Activated T-helper 1 cell treated with anti-CD3 and anti-CD28 coated beads, Interleukin-12 subunit alpha, Interleukin-12 subunit beta, Interleukin-2, Interleukin-4 antibody, amounts not matched to agents 30 ng/mL and 10 ng/mL and 1 ng/mL, durations not matched to agents 14 hours and 24 hours and 36 hours (primary cell): ENCODE measurements at regions of chr3 and their contacts with region 1.

Region 1: GRCh38 chr3:119989981-119990655 is 104.1 kb downstream of the GSK3B start:
- DNase-seq: no peak
- H3K4me3 Mint-ChIP-seq: no peak overlapping the region
- H3K27ac Mint-ChIP-seq: no peak overlapping the region
- H3K4me1 Mint-ChIP-seq: peaks cover 4% of the 10 kb centered on the region
- H3K27me3 Mint-ChIP-seq: no peaks in the 10 kb centered on the region

Region 2: GRCh38 chr3:119206611-119207511 is 783.3 kb before region 1 on chr3:
- intact Hi-C with region 1: no loop called
- DNase-seq: no peak
- H3K4me3 Mint-ChIP-seq: no peak overlapping the region
- H3K27ac Mint-ChIP-seq: no peak overlapping the region
- H3K4me1 Mint-ChIP-seq: peaks cover 23% of the 10 kb centered on the region
- H3K27me3 Mint-ChIP-seq: no peaks in the 10 kb centered on the region

Region 3: DNA sequence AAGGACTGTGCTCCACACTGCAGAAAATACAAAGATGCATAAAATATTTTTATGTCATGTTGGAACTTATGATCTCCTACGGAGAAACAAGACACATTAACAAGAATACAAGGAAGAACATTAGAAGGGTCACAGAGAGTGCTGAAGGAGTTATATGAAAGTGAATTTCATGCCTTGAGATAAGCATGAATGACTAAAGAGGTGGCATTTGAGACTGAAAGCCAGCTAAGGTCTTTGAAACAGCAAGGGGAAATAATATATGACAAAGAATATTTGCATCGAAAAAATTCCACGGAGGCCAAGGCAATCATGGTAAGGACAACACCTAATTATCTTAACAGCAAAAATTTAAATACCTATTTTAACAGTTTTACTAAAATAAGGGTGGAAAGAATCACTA is 91.6 kb after region 1 on chr3:
- intact Hi-C with region 1: loop called (anchors 1 kb)
- DNase-seq: no peak
- H3K4me3 Mint-ChIP-seq: no peak overlapping the region
- H3K27ac Mint-ChIP-seq: no peak overlapping the region
- H3K4me1 Mint-ChIP-seq: peaks cover 39% of the 10 kb centered on the region
- H3K27me3 Mint-ChIP-seq: no peaks in the 10 kb centered on the region